Breast epithelium (tissue), 4 donors: ENCODE measurements at regions of chr5 and their contacts with region 1.

Region 1: GRCh38 chr5:75536147-75537025 is 24.7 kb downstream of the POLK start:
- DNase-seq: no peak
- H3K4me3 ChIP-seq: no peak overlapping the region
- H3K27ac ChIP-seq: no peak overlapping the region
- H3K4me1 ChIP-seq: no peaks in the 10 kb centered on the region
- H3K27me3 ChIP-seq: no peaks in the 10 kb centered on the region
- CTCF ChIP-seq: no peak
- POLR2A ChIP-seq: no peak

Region 2: DNA sequence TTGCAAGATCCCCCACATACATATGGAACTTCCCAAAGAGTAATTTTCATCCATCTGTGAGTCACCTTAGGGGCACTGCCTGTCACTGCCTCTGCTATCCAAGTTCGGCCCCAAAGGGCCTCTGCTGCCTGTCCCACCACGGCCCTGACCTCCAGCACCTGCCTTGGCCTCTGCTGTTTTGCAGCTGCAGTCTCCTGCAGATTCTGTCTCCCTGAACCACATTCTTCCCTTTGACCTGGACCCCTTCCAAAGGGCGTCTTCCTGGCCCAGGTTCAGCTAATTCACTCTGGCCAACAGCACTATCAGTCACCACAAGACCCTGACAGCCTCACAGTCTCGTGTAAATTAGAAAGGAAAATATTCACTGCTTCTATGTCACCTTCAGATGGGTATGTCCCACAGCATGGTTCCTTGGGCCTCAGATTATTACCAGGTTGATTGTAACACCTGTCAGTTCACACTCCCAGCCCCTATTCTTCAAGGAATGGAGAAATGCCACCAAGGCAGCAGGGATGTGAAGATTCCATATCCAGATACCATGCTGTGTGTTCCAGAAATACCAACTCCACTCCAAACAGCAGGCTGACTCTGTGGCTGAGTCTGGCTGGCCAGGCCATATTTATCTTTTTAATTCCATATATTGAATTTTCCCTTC is 1431.1 kb before region 1 on chr5:
- intact Hi-C with region 1: no loop called
- DNase-seq: no peak
- H3K4me3 ChIP-seq: no peak overlapping the region
- H3K27ac ChIP-seq: no peak overlapping the region
- H3K4me1 ChIP-seq: no peaks in the 10 kb centered on the region
- H3K27me3 ChIP-seq: no peaks in the 10 kb centered on the region
- CTCF ChIP-seq: no peak
- POLR2A ChIP-seq: no peak

Region 3: DNA sequence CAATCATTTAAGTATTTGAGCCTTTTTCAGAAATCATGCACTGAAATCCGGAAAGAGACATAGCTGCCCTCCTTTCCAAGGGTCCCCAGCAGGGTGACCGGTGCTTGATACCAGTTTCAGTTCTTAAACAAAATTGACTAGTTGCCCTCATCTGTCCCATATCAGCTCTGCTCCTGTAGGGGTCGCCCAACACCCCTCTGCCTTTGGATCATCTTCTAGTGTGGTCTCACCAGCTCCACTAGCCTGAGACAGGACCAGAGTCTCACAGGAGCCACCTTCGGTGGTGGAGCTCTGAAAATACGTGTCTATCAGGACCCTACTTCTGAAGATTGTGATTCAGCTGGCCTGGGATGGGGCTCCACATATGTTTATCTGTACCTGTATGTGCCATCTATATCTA is 1324.0 kb before region 1 on chr5:
- intact Hi-C with region 1: loop called (anchors 5 kb)
- DNase-seq: no peak
- H3K4me3 ChIP-seq: no peak overlapping the region
- H3K27ac ChIP-seq: no peak overlapping the region
- H3K4me1 ChIP-seq: no peaks in the 10 kb centered on the region
- H3K27me3 ChIP-seq: no peaks in the 10 kb centered on the region
- CTCF ChIP-seq: no peak
- POLR2A ChIP-seq: no peak

Region 4: GRCh38 chr5:75336625-75337339 is 199.6 kb before region 1 on chr5 and contains the start of gene HMGCR:
- intact Hi-C with region 1: loop called (anchors 2 kb)
- DNase-seq: peak; percentile 99
- H3K4me3 ChIP-seq: peak within 1 kb of the TSS; percentile 81 to 93 (median 85)
- H3K27ac ChIP-seq: peak within 1 kb of the TSS; percentile 94 to 98
- H3K4me1 ChIP-seq: peaks cover 0 to 6% of the 10 kb centered on the region in 2 donors
- H3K27me3 ChIP-seq: no peaks in the 10 kb centered on the region
- CTCF ChIP-seq: no peak
- POLR2A ChIP-seq: peak; percentile 9
- total RNA-seq, gene HMGCR: 12.8 to 34.0 (median 16.5) TPM